Heart right ventricle (tissue), 16 donors: ENCODE measurements at regions of chr1 and their contacts with region 1.

Region 1: GRCh38 chr1:178566187-178566586 is 53.3 kb downstream of the TEX35 start:
- DNase-seq: no peak
- ATAC-seq: no peak
- H3K4me3 ChIP-seq: no peak overlapping the region
- H3K27ac ChIP-seq: no peak overlapping the region
- H3K4me1 ChIP-seq: peaks cover 0 to 20% (median 0%) of the 10 kb centered on the region in 9 donors
- H3K27me3 ChIP-seq: no peaks in the 10 kb centered on the region
- CTCF ChIP-seq: no peak

Region 2: GRCh38 chr1:178434360-178434759 is 131.8 kb before region 1 on chr1:
- intact Hi-C with region 1: no loop called
- DNase-seq: no peak
- ATAC-seq: no peak
- H3K4me3 ChIP-seq: no peak overlapping the region
- H3K27ac ChIP-seq: no peak overlapping the region
- H3K4me1 ChIP-seq: peaks cover 0 to 18% (median 4%) of the 10 kb centered on the region in 9 donors
- H3K27me3 ChIP-seq: no peaks in the 10 kb centered on the region
- CTCF ChIP-seq: no peak

Region 3: GRCh38 chr1:179637211-179637860 is 1071.1 kb after region 1 on chr1:
- intact Hi-C with region 1: loop called in 1 of 10 experiments (anchors 5 kb)
- DNase-seq: no peak
- ATAC-seq: peak in 4 of 8 donors; percentile 29 to 83 (median 48)
- H3K4me3 ChIP-seq: no peak overlapping the region
- H3K27ac ChIP-seq: no peak overlapping the region
- H3K4me1 ChIP-seq: no peaks in the 10 kb centered on the region
- H3K27me3 ChIP-seq: no peaks in the 10 kb centered on the region
- CTCF ChIP-seq: no peak